Mammary epithelial cell (primary cell): ENCODE measurements at regions of chr2 and their contacts with region 1.

Region 1: GRCh38 chr2:32182667-32183066 is 17.0 kb downstream of the SLC30A6 start:
- DNase-seq: no peak
- H3K4me3 ChIP-seq: no peak overlapping the region
- H3K27ac ChIP-seq: no peak overlapping the region
- H3K4me1 ChIP-seq: no peaks in the 10 kb centered on the region
- H3K27me3 ChIP-seq: no peaks in the 10 kb centered on the region
- CTCF ChIP-seq: no peak

Region 2: DNA sequence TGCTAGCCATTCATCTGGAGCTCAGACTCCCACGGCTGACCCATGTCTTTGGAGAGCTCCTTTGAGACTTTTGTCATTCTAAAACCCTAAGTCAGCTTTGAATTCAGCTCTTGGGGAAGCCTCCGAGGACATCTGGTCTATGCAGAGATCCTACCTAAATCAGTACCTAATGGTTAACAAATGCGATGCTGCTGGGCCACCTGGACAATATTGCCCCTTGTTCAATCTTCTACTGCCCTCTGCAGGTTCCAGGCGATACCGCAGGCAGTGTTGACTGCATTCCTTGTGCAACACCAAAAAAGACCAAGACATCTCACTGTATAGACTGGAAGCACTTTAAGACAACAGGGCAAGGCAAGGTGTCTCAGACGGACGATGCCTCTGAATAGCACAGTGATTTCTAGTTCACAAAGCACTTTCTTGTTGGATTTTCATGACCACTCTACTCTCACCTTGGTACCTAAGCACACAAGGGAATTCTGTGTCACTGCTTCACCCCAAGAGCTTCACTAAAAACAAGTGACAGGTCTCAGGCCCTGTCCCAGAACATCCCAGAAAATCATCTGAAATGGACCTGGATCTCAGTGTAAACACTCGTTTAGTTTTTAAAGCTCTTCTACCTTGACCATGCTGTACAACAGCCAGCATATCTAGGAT is 849.0 kb before region 1 on chr2:
- CTCF ChIA-PET with region 1: no interaction called
- dilution Hi-C with region 1: no loop called
- in situ Hi-C with region 1: no loop called
- intact Hi-C with region 1: no loop called
- DNase-seq: peak; percentile 82
- H3K4me3 ChIP-seq: no peak overlapping the region
- H3K27ac ChIP-seq: peak overlapping the region; percentile 93
- H3K4me1 ChIP-seq: peaks cover 48% of the 10 kb centered on the region
- H3K27me3 ChIP-seq: no peaks in the 10 kb centered on the region
- CTCF ChIP-seq: peak; percentile 98 to 99

Region 3: DNA sequence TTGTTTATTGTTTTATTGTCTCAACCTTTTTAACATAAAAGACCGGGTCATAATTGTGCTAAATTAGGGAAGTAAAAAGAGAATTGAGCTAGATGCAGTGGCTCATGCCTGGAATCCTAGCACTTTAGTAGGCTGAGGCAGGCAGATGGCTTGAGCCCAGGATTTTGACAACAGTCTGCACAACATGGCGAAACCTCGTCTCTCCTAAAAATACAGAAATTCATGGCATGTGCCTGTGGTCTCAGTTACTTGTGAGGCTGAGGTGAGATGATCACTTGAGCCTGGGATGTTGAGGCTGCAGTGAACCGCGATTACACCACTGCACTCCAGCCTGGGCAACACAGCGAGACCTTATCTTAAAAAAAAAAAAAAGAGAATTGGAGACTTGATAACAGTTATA is 341.0 kb after region 1 on chr2:
- CTCF ChIA-PET with region 1: no interaction called
- dilution Hi-C with region 1: no loop called
- in situ Hi-C with region 1: no loop called
- intact Hi-C with region 1: no loop called
- DNase-seq: no peak
- H3K4me3 ChIP-seq: no peak overlapping the region
- H3K27ac ChIP-seq: no peak overlapping the region
- H3K4me1 ChIP-seq: no peaks in the 10 kb centered on the region
- H3K27me3 ChIP-seq: no peaks in the 10 kb centered on the region
- CTCF ChIP-seq: no peak

Region 4: GRCh38 chr2:32534831-32535230 is 352.2 kb after region 1 on chr2:
- CTCF ChIA-PET with region 1: interaction called, 20 read pairs
- dilution Hi-C with region 1: no loop called
- in situ Hi-C with region 1: no loop called
- intact Hi-C with region 1: no loop called
- DNase-seq: no peak
- H3K4me3 ChIP-seq: no peak overlapping the region
- H3K27ac ChIP-seq: no peak overlapping the region
- H3K4me1 ChIP-seq: no peaks in the 10 kb centered on the region
- H3K27me3 ChIP-seq: no peaks in the 10 kb centered on the region
- CTCF ChIP-seq: no peak